CD14-positive monocyte (primary cell): ENCODE measurements at regions of chr5 and their contacts with region 1.

Region 1: GRCh38 chr5:171484460-171484899 is 65.0 kb downstream of the FGF18 start:
- DNase-seq: peak; percentile 1 to 26 (median 10)
- H3K4me3 ChIP-seq: no peak overlapping the region
- H3K4me3 Mint-ChIP-seq: no peak overlapping the region
- H3K27ac ChIP-seq: no peak overlapping the region
- H3K27ac Mint-ChIP-seq: no peak overlapping the region
- H3K4me1 ChIP-seq: no peaks in the 10 kb centered on the region
- H3K4me1 Mint-ChIP-seq: peaks cover 2% of the 10 kb centered on the region
- H3K27me3 ChIP-seq: no peaks in the 10 kb centered on the region
- H3K27me3 Mint-ChIP-seq: peaks cover 5 to 7% (median 6%) of the 10 kb centered on the region in 3 donors
- CTCF ChIP-seq: peak; percentile 73

Region 2: DNA sequence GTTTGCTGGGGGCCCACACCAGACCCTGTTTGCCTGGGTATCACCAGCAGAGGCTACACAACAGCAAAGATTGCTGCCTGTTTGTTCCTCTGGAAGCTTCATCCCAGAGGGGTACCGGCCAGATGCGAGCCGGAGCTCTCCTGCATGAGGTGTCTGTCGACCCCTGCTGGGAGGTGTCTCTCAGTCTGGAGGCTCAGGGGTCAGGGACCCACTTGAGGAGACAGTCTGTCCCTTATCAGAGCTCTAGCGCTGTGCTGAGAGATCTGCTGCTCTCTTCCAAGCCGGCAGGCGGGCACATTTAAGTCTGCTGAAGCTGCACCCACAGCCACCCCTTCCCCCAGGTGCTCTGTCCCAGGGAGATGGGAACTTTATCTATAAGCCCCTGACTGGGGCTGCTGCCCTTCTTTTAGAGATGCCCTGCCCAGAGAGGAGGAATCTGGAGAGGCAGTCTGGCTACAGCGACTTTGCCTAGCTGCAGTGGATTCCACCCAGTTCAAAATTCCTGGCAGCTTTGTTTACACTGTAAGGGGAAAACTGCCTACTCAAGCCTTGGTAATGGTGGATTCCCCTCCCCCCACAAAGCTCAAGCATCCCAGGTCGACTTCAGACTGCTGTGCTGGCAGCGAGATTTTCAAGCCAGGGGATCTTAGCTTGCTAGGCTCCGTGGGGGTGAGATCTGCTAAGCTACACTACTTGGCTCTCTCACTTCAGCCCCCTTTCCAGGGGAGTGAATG is 381.4 kb before region 1 on chr5:
- intact Hi-C with region 1: no loop called
- DNase-seq: no peak
- H3K4me3 ChIP-seq: no peak overlapping the region
- H3K4me3 Mint-ChIP-seq: no peak overlapping the region
- H3K27ac ChIP-seq: no peak overlapping the region
- H3K27ac Mint-ChIP-seq: no peak overlapping the region
- H3K4me1 ChIP-seq: no peaks in the 10 kb centered on the region
- H3K4me1 Mint-ChIP-seq: no peaks in the 10 kb centered on the region
- H3K27me3 ChIP-seq: no peaks in the 10 kb centered on the region
- H3K27me3 Mint-ChIP-seq: peaks cover 0 to 2% (median 0%) of the 10 kb centered on the region in 3 donors
- CTCF ChIP-seq: no peak

Region 3: DNA sequence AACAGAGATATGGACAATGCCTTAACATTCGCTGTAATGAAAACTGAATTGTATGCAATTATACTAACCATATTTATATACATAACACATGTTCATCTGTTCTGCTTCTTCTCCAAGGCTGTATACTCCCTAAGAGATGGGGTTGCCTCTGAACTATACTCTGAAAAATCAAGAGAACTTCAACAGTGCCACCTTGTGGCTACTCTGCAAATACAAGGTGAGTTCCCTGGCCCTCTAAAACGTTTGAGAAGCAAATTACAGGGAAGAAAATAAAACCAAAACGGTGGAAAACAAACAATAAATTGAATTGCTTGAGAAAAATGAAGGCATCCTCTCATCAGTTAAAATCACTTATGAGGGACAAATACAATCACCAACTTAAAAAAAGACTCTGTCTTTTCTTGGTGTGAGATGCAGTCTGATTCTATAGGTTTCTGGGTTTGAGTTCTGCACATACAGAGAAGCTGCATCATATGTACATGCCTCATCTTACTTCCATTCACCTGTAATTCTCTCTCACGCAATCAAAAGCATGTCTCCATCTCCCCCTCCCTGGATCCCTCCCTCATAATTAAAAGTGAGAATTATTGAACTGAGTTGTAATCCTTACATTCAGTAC is 423.4 kb after region 1 on chr5:
- intact Hi-C with region 1: loop called (anchors 5 kb)
- DNase-seq: peak; percentile 30 to 50 (median 50)
- H3K4me3 ChIP-seq: no peak overlapping the region
- H3K4me3 Mint-ChIP-seq: no peak overlapping the region
- H3K27ac ChIP-seq: no peak overlapping the region
- H3K27ac Mint-ChIP-seq: no peak overlapping the region
- H3K4me1 ChIP-seq: peaks cover 15 to 16% of the 10 kb centered on the region in 2 donors
- H3K4me1 Mint-ChIP-seq: peaks cover 24% of the 10 kb centered on the region
- H3K27me3 ChIP-seq: no peaks in the 10 kb centered on the region
- H3K27me3 Mint-ChIP-seq: peaks cover 0 to 2% (median 0%) of the 10 kb centered on the region in 3 donors
- CTCF ChIP-seq: peak; percentile 89